K562 (cell line): ENCODE measurements at regions of chr1 and their contacts with region 1.

Region 1: GRCh38 chr1:109643385-109644230 is 12.3 kb upstream of the GSTM4 start:
- DNase-seq: peak; percentile 84 to 91 (median 86)
- ATAC-seq: peak; percentile 97
- H3K4me3 ChIP-seq: no peak overlapping the region
- H3K27ac ChIP-seq: no peak overlapping the region
- H3K4me1 ChIP-seq: peaks cover 26 to 46% of the 10 kb centered on the region in 2 experiments
- H3K27me3 ChIP-seq: no peaks in the 10 kb centered on the region; a peak in 1 of 5 replicates
- CTCF ChIP-seq: peak; percentile 96 to 97 (median 97)
- EP300 ChIP-seq: no peak
- POLR2A ChIP-seq: no peak
- RAD21 ChIP-seq: peak; percentile 91 to 96

Region 2: GRCh38 chr1:109620841-109621286 is 22.7 kb before region 1 on chr1:
- CTCF ChIA-PET with region 1: interaction called, 3 read pairs
- POLR2A ChIA-PET with region 1: interaction called, 17 read pairs
- in situ Hi-C with region 1: no loop called
- intact Hi-C with region 1: no loop called
- DNase-seq: peak; percentile 93 to 96 (median 94)
- ATAC-seq: peak; percentile 84
- H3K4me3 ChIP-seq: peak overlapping the region; percentile 61
- H3K27ac ChIP-seq: peak overlapping the region; percentile 90; the same call in 1 of the 3 replicates
- H3K4me1 ChIP-seq: peaks cover 32 to 61% of the 10 kb centered on the region in 2 experiments
- H3K27me3 ChIP-seq: no peaks in the 10 kb centered on the region
- CTCF ChIP-seq: no peak
- EP300 ChIP-seq: no peak
- POLR2A ChIP-seq: no peak
- RAD21 ChIP-seq: no peak

Region 3: DNA sequence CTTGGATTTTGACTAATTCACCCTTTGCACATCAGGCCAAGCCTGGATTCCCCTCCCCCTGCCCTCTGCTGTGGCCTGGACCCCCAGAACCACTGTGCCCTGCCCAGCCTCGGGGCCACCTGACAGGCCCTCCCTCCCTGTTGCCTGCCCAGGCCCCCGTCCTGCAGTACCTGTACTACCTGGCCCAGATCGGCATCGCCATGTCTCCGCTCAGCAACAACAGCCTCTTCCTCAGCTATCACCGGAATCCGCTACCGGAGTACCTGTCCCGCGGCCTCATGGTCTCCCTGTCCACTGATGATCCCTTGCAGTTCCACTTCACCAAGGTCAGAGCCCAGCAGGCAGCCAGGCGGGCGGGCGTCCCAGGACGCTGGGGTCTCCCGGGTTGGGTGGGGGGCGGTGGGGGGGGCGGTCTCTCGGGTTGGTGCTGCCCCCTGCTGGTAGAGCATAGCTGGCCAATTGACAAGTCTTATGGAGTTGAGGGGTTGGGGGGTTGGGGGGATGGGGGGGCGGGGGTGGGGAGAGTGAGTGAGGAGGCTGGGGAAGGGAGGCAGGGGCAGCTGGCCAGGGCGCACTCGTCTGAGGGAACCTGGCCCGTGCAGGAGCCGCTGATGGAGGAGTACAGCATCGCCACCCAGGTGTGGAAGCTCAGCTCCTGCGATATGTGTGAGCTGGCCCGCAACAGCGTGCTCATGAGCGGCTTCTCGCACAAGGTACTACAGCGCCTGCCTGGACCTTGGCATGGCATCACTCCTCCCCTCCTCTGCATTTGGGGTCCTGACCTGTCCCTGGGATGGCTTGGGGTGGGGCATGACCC is 13.3 kb before region 1 on chr1:
- CTCF ChIA-PET with region 1: interaction called, 3 read pairs
- POLR2A ChIA-PET with region 1: interaction called, 18 read pairs
- in situ Hi-C with region 1: no loop called
- intact Hi-C with region 1: no loop called
- DNase-seq: peak; percentile 49 to 77 (median 76)
- ATAC-seq: peak; percentile 56
- H3K4me3 ChIP-seq: no peak overlapping the region
- H3K27ac ChIP-seq: no peak overlapping the region
- H3K4me1 ChIP-seq: peaks cover 0 to 39% of the 10 kb centered on the region in 2 experiments; a peak in 2 of 5 replicates
- H3K27me3 ChIP-seq: no peaks in the 10 kb centered on the region
- CTCF ChIP-seq: 0 out of 6 replicates have a peak, but pooled peaks of 1 of the 3 experiments have one; percentile 21
- EP300 ChIP-seq: no peak
- POLR2A ChIP-seq: no peak
- RAD21 ChIP-seq: no peak

Region 4: DNA sequence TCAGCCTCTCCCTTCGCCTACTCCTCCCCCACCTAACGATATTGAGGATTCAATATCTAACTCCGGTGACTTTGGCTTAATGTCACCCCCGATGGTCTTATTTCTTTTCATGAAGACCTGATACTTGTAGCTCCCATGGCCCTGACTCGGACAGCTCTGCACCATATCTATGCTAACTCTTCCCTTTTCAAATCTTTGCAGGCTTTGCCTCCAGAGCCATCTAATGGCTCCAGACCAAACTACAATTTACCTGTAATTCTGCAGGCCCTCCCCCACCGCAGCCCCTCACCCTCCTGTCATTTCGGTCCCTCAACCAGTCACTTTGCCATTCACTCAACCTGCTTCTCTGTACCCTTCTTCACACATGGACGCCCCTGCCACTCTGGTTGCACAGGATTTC is 60.6 kb after region 1 on chr1:
- CTCF ChIA-PET with region 1: interaction called, 6 read pairs
- POLR2A ChIA-PET with region 1: no interaction called
- in situ Hi-C with region 1: no loop called
- intact Hi-C with region 1: loop called (anchors 5 kb)
- DNase-seq: peak; percentile 2 to 11 (median 6)
- ATAC-seq: no peak
- H3K4me3 ChIP-seq: no peak overlapping the region
- H3K27ac ChIP-seq: no peak overlapping the region
- H3K4me1 ChIP-seq: no peaks in the 10 kb centered on the region
- H3K27me3 ChIP-seq: peaks cover 0 to 8% of the 10 kb centered on the region in 2 experiments; a peak in 2 of 5 replicates
- CTCF ChIP-seq: peak in 2 of 3 experiments; percentile 10 to 44; a peak in 2 of 6 replicates
- EP300 ChIP-seq: no peak
- POLR2A ChIP-seq: no peak
- RAD21 ChIP-seq: peak in 1 of 2 experiments; percentile 25; a peak in 1 of 4 replicates

Region 5: DNA sequence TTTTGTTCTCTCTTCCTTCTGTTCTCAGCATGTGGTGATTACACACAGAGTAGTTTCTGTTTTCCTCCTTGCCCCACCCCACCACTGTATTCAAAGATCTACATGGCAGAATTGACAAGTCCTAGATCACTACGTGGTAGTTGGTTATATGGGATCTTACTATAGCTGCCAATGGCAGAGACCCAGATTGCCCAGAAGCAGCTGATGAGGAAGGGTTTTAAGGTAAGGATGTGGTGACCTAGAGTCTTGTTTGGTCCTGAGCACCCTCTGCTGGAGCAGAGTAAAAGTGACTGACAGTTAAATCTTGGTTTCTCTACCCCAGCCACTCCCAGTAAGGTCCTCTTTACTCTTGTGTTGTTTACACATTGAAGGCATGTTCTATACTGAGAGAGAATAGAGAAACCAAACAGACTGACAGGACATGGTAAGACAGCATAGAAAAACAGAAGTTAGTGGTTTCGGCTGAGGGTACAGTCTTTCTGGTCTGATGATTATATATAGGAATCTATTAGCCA is 368.0 kb after region 1 on chr1:
- CTCF ChIA-PET with region 1: no interaction called
- POLR2A ChIA-PET with region 1: no interaction called
- in situ Hi-C with region 1: loop called (anchors 10 kb)
- intact Hi-C with region 1: no loop called
- DNase-seq: peak; percentile 56 to 70 (median 62)
- ATAC-seq: peak; percentile 97
- H3K4me3 ChIP-seq: no peak overlapping the region
- H3K27ac ChIP-seq: no peak overlapping the region
- H3K4me1 ChIP-seq: no peaks in the 10 kb centered on the region
- H3K27me3 ChIP-seq: no peaks in the 10 kb centered on the region
- CTCF ChIP-seq: peak; percentile 65 to 79 (median 68)
- EP300 ChIP-seq: no peak
- POLR2A ChIP-seq: no peak
- RAD21 ChIP-seq: peak; percentile 69 to 85

Region 6: GRCh38 chr1:110118636-110119615 is 475.3 kb after region 1 on chr1:
- CTCF ChIA-PET with region 1: no interaction called
- POLR2A ChIA-PET with region 1: no interaction called
- in situ Hi-C with region 1: no loop called
- intact Hi-C with region 1: loop called (anchors 10 kb)
- DNase-seq: no peak
- ATAC-seq: no peak
- H3K4me3 ChIP-seq: no peak overlapping the region
- H3K27ac ChIP-seq: no peak overlapping the region
- H3K4me1 ChIP-seq: no peaks in the 10 kb centered on the region
- H3K27me3 ChIP-seq: peaks cover 10 to 35% of the 10 kb centered on the region in 2 experiments; a peak in 4 of 5 replicates
- CTCF ChIP-seq: no peak
- EP300 ChIP-seq: no peak
- POLR2A ChIP-seq: no peak
- RAD21 ChIP-seq: no peak